GM12878 (cell line): ENCODE measurements at regions of chr4 and their contacts with region 1.

Region 1: GRCh38 chr4:68655764-68656444 is 14.5 kb downstream of the UGT2B15 start:
- DNase-seq: no peak
- ATAC-seq: peak; percentile 21
- H3K4me3 ChIP-seq: no peak overlapping the region
- H3K27ac ChIP-seq: no peak overlapping the region
- H3K4me1 ChIP-seq: no peaks in the 10 kb centered on the region
- H3K27me3 ChIP-seq: no peaks in the 10 kb centered on the region
- CTCF ChIP-seq: no peak
- EP300 ChIP-seq: no peak
- POLR2A ChIP-seq: no peak
- RAD21 ChIP-seq: no peak

Region 2: GRCh38 chr4:68390205-68390935 is 265.5 kb before region 1 on chr4:
- CTCF ChIA-PET with region 1: no interaction called
- POLR2A ChIA-PET with region 1: no interaction called
- RAD21 ChIA-PET with region 1: no interaction called
- SMC1A ChIA-PET with region 1: no interaction called
- in situ Hi-C with region 1: no loop called
- intact Hi-C with region 1: no loop called
- DNase-seq: no peak
- ATAC-seq: no peak
- H3K4me3 ChIP-seq: no peak overlapping the region
- H3K27ac ChIP-seq: no peak overlapping the region
- H3K4me1 ChIP-seq: no peaks in the 10 kb centered on the region
- H3K27me3 ChIP-seq: no peaks in the 10 kb centered on the region
- CTCF ChIP-seq: no peak
- EP300 ChIP-seq: no peak
- POLR2A ChIP-seq: no peak
- RAD21 ChIP-seq: no peak

Region 3: DNA sequence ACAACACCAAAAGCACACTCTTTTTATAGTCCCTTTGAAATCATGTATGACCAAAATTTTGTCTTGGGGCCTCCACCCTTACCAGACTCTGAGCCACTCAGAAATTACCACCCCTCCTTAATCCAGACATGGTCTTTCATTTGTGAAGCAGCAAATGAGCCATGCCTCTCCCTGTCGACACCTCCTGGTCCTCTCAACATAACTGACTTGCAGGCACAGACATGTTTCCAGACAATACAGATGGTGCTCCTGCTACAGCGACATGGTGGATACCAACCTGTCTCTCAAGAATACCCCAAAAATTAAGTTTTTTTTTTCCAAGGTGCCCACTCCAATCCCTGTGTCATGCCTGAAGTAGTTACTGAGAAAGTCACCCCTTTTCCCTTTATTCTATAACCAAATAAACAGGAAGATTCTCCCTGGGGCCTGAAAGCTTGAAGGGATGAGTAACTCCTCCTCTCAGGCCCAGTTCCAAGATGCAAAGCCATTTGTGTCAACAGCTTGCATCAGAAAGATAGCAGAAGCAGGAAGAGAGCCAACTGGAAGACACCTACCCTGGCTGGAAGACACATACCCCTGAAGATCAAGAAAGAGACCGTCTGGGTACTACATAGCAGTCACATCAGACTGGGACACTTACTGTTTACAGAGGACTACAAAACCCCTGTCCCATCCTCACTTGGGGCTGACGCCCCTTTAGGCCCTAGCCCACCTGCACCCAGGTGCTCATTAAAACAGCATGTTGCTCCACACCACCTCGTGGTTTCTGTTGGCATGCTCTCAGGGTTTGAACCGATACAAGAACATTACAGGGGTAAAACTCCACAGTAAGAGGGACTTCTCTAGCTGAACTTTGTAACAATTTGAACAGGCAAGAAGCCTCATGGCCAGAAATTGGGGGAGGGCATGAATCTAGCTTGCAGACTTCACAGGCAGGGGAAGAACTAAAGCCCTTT is 74.2 kb before region 1 on chr4:
- CTCF ChIA-PET with region 1: no interaction called
- POLR2A ChIA-PET with region 1: no interaction called
- RAD21 ChIA-PET with region 1: no interaction called
- SMC1A ChIA-PET with region 1: no interaction called
- in situ Hi-C with region 1: no loop called
- intact Hi-C with region 1: no loop called
- DNase-seq: no peak
- ATAC-seq: no peak
- H3K4me3 ChIP-seq: no peak overlapping the region
- H3K27ac ChIP-seq: no peak overlapping the region
- H3K4me1 ChIP-seq: no peaks in the 10 kb centered on the region
- H3K27me3 ChIP-seq: no peaks in the 10 kb centered on the region
- CTCF ChIP-seq: no peak
- EP300 ChIP-seq: no peak
- POLR2A ChIP-seq: no peak
- RAD21 ChIP-seq: no peak

Region 4: GRCh38 chr4:68606240-68606639 is 49.7 kb before region 1 on chr4:
- CTCF ChIA-PET with region 1: no interaction called
- POLR2A ChIA-PET with region 1: no interaction called
- RAD21 ChIA-PET with region 1: no interaction called
- SMC1A ChIA-PET with region 1: no interaction called
- in situ Hi-C with region 1: no loop called
- intact Hi-C with region 1: no loop called
- DNase-seq: no peak
- ATAC-seq: no peak
- H3K4me3 ChIP-seq: no peak overlapping the region
- H3K27ac ChIP-seq: no peak overlapping the region
- H3K4me1 ChIP-seq: no peaks in the 10 kb centered on the region
- H3K27me3 ChIP-seq: no peaks in the 10 kb centered on the region
- CTCF ChIP-seq: no peak
- EP300 ChIP-seq: no peak
- POLR2A ChIP-seq: no peak
- RAD21 ChIP-seq: no peak

Region 5: DNA sequence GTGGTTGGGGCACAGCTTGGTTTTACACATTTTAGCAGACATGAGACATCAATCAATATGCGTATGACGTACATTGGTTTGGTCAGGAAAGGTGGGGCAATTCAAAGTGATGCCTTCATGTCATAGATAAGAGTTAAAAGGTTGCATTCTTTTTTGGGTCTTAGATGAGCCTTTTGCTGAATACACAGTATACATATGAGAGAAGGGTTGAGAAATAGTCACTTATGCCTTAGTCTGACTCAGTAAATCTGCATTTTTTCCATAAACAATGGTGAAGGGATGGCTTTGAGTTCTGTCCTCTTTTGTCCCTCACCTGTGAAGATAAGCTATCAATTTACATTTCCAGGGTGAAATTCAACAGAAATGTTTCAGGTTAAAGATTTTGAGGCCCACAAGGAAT is 58.5 kb after region 1 on chr4:
- CTCF ChIA-PET with region 1: no interaction called
- POLR2A ChIA-PET with region 1: no interaction called
- RAD21 ChIA-PET with region 1: no interaction called
- SMC1A ChIA-PET with region 1: no interaction called
- in situ Hi-C with region 1: no loop called
- intact Hi-C with region 1: loop called (anchors 5 kb)
- DNase-seq: no peak
- ATAC-seq: no peak
- H3K4me3 ChIP-seq: no peak overlapping the region
- H3K27ac ChIP-seq: no peak overlapping the region
- H3K4me1 ChIP-seq: no peaks in the 10 kb centered on the region
- H3K27me3 ChIP-seq: no peaks in the 10 kb centered on the region
- CTCF ChIP-seq: no peak
- EP300 ChIP-seq: no peak
- POLR2A ChIP-seq: no peak
- RAD21 ChIP-seq: no peak

Region 6: GRCh38 chr4:68732653-68733466 is 77.0 kb after region 1 on chr4:
- CTCF ChIA-PET with region 1: no interaction called
- POLR2A ChIA-PET with region 1: no interaction called
- RAD21 ChIA-PET with region 1: no interaction called
- SMC1A ChIA-PET with region 1: no interaction called
- in situ Hi-C with region 1: no loop called
- intact Hi-C with region 1: loop called (anchors 5 kb)
- DNase-seq: peak; percentile 13
- ATAC-seq: peak; percentile 90
- H3K4me3 ChIP-seq: no peak overlapping the region
- H3K27ac ChIP-seq: no peak overlapping the region
- H3K4me1 ChIP-seq: no peaks in the 10 kb centered on the region
- H3K27me3 ChIP-seq: no peaks in the 10 kb centered on the region
- CTCF ChIP-seq: no peak
- EP300 ChIP-seq: no peak
- POLR2A ChIP-seq: no peak
- RAD21 ChIP-seq: no peak